ENCODE measurements at regions of chr6 and their contacts with region 1.

Region 1: GRCh38 chr6:3258720-3259490 is at the start of gene PSMG4:
- DNase-seq: peak; percentile 96
- ATAC-seq: peak; percentile 90
- H3K4me3 Mint-ChIP-seq: peak within 1 kb of the TSS; percentile 98
- H3K27ac Mint-ChIP-seq: peak within 1 kb of the TSS; percentile 88
- H3K4me1 Mint-ChIP-seq: peaks cover 40% of the 10 kb centered on the region
- H3K27me3 Mint-ChIP-seq: peaks cover 6% of the 10 kb centered on the region
- CTCF ChIP-seq: no peak
- total RNA-seq, gene PSMG4: 28.7 and 29.9 TPM in 2 replicates

Region 2: GRCh38 chr6:3118353-3119039 is 140.4 kb before region 1 on chr6 and contains the start of gene BPHL:
- CTCF ChIA-PET with region 1: no interaction called
- POLR2A ChIA-PET with region 1: interaction called, 4 read pairs
- intact Hi-C with region 1: loop called (anchors 1 kb)
- DNase-seq: peak; percentile 100
- ATAC-seq: peak; percentile 92
- H3K4me3 Mint-ChIP-seq: peak within 1 kb of the TSS; percentile 89
- H3K27ac Mint-ChIP-seq: peak within 1 kb of the TSS; percentile 93
- H3K4me1 Mint-ChIP-seq: peaks cover 16% of the 10 kb centered on the region
- H3K27me3 Mint-ChIP-seq: no peaks in the 10 kb centered on the region
- CTCF ChIP-seq: no peak
- total RNA-seq, gene BPHL: 10.5 and 11.0 TPM in 2 replicates

Region 3: GRCh38 chr6:3125815-3126214 is 133.1 kb before region 1 on chr6:
- CTCF ChIA-PET with region 1: interaction called, 3 read pairs
- POLR2A ChIA-PET with region 1: interaction called, 4 read pairs
- intact Hi-C with region 1: loop called (anchors 2 kb)
- DNase-seq: no peak
- ATAC-seq: no peak
- H3K4me3 Mint-ChIP-seq: no peak overlapping the region
- H3K27ac Mint-ChIP-seq: no peak overlapping the region
- H3K4me1 Mint-ChIP-seq: peaks cover 8% of the 10 kb centered on the region
- H3K27me3 Mint-ChIP-seq: no peaks in the 10 kb centered on the region
- CTCF ChIP-seq: no peak

Region 4: GRCh38 chr6:3162565-3163247 is 96.2 kb before region 1 on chr6:
- CTCF ChIA-PET with region 1: no interaction called
- POLR2A ChIA-PET with region 1: interaction called, 5 read pairs
- intact Hi-C with region 1: loop called (anchors 1 kb)
- DNase-seq: peak; percentile 70
- ATAC-seq: peak; percentile 82
- H3K4me3 Mint-ChIP-seq: peak overlapping the region; percentile 87
- H3K27ac Mint-ChIP-seq: peak overlapping the region; percentile 69
- H3K4me1 Mint-ChIP-seq: peaks cover 28% of the 10 kb centered on the region
- H3K27me3 Mint-ChIP-seq: peaks cover 2% of the 10 kb centered on the region
- CTCF ChIP-seq: no peak

Region 5: DNA sequence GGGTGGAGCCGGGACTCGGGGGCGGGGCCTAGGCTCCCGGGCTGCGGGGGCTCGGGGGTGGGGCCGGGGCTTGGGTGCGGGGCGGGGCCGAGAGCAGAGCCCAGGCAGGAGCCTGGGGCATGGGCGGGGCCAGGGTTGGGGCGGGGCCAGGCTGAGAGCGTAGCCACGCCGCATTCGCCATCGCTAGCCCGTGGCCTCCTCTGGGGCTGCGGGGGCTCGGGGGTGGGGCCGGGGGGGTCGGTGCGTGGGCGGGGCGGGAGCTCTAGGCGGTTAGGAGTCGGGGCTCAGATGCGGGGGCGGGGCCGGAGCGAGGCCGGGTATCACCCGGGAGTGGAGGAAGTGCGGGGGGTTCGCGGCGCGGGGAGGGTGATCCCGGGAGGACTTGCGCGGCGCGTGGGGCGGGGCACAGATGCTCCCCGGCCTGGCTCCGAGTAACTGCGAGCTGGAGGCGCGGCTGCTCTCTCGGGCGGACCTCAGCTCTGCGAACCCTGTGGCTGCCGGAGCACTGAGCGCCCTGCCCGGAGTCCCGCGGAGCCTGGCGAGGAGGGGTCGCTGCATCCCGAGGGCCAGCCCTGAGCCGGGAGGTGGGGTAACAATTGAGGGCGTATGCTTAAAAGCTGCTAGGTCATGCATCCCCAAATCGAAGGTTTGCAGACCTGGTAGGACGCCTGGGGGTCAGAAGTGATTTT is 876.9 kb after region 1 on chr6:
- CTCF ChIA-PET with region 1: no interaction called
- POLR2A ChIA-PET with region 1: no interaction called
- intact Hi-C with region 1: loop called (anchors 5 kb)
- DNase-seq: peak; percentile 83
- ATAC-seq: peak; percentile 92
- H3K4me3 Mint-ChIP-seq: peak overlapping the region; percentile 85
- H3K27ac Mint-ChIP-seq: peak overlapping the region; percentile 76
- H3K4me1 Mint-ChIP-seq: peaks cover 27% of the 10 kb centered on the region
- H3K27me3 Mint-ChIP-seq: no peaks in the 10 kb centered on the region
- CTCF ChIP-seq: no peak

Measured in activated B cell treated with CpG ODN at 0.5 μM for 24 hours (primary cell).